Endothelial cell of umbilical vein (primary cell): ENCODE measurements at regions of chr18 and their contacts with region 1.

Region 1: DNA sequence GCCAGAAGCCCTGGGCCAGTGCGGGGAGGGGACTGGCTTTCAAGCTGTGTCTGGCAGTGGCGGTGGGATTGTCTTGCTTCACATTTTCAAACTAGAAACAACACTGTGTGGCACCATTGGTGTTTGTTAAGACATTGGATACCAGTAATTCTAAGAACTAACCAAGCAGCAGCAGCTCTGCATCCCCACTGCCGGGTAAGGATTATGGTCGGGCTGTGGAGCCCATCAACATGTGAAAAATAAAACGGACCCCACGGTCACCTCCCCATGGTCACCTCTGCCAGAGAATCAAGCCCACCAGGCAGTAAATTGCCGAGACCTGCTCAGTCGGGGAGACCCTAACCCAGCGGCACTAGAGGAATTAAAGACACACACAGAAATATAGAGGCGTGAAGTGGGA is 65.3 kb downstream of the C18orf63 start:
- DNase-seq: no peak
- H3K4me3 ChIP-seq: no peak overlapping the region
- H3K27ac ChIP-seq: no peak overlapping the region
- H3K4me1 ChIP-seq: no peaks in the 10 kb centered on the region
- H3K27me3 ChIP-seq: no peaks in the 10 kb centered on the region
- CTCF ChIP-seq: no peak
- POLR2A ChIP-seq: no peak

Region 2: GRCh38 chr18:74360852-74361655 is 19.9 kb before region 1 on chr18:
- CTCF ChIA-PET with region 1: no interaction called
- POLR2A ChIA-PET with region 1: no interaction called
- dilution Hi-C with region 1: no loop called
- intact Hi-C with region 1: loop called (anchors 1 kb)
- DNase-seq: no peak
- H3K4me3 ChIP-seq: no peak overlapping the region
- H3K27ac ChIP-seq: no peak overlapping the region
- H3K4me1 ChIP-seq: no peaks in the 10 kb centered on the region
- H3K27me3 ChIP-seq: peaks cover 0 to 5% of the 10 kb centered on the region in 2 experiments
- CTCF ChIP-seq: no peak
- POLR2A ChIP-seq: no peak

Region 3: GRCh38 chr18:74412116-74412880 is 31.4 kb after region 1 on chr18:
- CTCF ChIA-PET with region 1: no interaction called
- POLR2A ChIA-PET with region 1: no interaction called
- dilution Hi-C with region 1: no loop called
- intact Hi-C with region 1: no loop called
- DNase-seq: no peak
- H3K4me3 ChIP-seq: no peak overlapping the region
- H3K27ac ChIP-seq: no peak overlapping the region
- H3K4me1 ChIP-seq: no peaks in the 10 kb centered on the region
- H3K27me3 ChIP-seq: no peaks in the 10 kb centered on the region
- CTCF ChIP-seq: no peak
- POLR2A ChIP-seq: no peak